ENCODE measurements at regions of chr2 and their contacts with region 1.

Region 1: DNA sequence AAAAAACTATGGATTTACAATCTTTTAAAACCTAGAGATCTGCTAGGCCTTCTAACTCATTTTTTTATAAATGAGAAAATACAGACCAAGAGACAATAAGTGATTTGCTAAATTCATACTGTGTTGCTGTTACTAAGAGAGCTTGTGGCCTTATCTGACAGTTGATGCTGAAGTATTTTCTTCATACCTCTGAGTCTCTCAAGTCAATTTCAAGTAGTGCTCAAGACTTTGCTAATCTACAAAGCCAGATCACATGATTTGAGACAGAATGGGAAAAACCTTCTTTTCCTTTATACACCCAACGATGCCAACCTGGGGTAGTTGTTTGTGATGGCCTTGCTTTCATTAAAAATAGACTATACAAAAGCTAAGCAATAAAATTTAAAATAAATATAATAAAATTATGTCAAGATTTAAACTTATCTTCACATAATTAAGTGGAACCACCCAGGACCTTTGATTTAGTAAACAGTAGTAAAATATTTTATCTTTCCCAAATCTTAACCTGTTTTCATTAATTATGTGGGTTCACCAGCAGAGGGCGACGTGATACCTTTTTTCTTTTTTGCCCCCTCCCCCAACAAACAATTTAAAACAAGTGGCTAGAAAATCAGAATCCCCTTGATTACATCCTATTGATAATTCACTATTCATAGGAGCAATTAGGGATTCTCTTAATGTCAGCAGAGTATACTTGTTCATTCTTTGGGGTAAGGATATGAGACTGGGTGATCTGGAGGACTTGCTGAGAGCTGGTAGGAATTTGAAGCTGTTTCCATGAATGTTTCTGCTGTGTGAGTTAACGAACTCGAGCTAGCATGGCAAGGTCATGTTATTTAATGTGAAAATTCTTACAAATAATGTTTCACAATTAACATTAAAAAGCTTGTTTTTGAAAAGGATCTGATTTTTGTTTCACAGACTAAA is 49.6 kb upstream of the SLC5A7 start:
- DNase-seq: peak; percentile 42
- H3K4me3 Mint-ChIP-seq: no peak overlapping the region
- H3K27ac Mint-ChIP-seq: no peak overlapping the region
- H3K4me1 Mint-ChIP-seq: no peaks in the 10 kb centered on the region
- H3K27me3 Mint-ChIP-seq: peaks cover 23% of the 10 kb centered on the region
- CTCF ChIP-seq: peak; percentile 59

Region 2: DNA sequence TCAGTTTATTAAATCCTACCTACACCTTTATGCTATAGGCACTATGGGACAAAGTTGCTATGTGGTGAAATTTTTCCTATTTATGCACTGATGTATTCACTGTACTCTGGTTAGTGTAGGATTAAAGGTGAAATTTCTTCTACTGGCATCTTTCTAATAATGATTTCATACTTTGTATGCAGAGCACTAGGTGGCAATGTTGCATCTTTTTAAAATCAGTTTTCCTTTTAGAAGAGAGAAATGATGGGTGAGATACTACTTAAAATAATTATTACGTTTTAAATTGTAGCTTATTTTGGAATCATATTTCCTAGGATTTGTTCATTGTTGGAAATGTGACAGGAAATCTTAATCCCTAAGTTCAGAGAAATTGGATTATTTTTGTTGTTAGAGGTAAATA is 1298.7 kb before region 1 on chr2:
- CTCF ChIA-PET with region 1: no interaction called
- intact Hi-C with region 1: loop called (anchors 1 kb)
- DNase-seq: no peak
- H3K4me3 Mint-ChIP-seq: no peak overlapping the region
- H3K27ac Mint-ChIP-seq: no peak overlapping the region
- H3K4me1 Mint-ChIP-seq: no peaks in the 10 kb centered on the region
- H3K27me3 Mint-ChIP-seq: peaks cover 11% of the 10 kb centered on the region
- CTCF ChIP-seq: peak; percentile 13

Region 3: DNA sequence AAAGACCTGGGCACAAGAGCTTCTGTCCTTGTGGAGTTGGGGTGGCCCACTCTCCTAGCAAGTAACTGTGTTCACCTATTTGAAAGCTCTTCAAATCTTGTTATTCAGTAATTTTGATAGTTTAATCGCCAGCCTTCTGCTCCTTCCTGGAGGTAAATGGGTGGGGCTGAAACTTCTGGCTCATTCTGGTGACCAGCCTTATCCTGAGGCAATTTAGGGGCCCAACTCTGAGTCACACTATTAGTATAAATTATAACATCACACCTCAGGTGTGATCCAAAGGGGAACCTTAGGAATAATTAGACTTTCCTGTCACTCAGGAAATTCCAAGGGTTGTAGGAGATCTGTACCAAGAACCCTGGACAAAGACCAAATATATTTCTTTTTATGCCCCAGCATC is 365.8 kb before region 1 on chr2:
- CTCF ChIA-PET with region 1: no interaction called
- intact Hi-C with region 1: loop called (anchors 10 kb)
- DNase-seq: no peak
- H3K4me3 Mint-ChIP-seq: no peak overlapping the region
- H3K27ac Mint-ChIP-seq: no peak overlapping the region
- H3K4me1 Mint-ChIP-seq: no peaks in the 10 kb centered on the region
- H3K27me3 Mint-ChIP-seq: no peaks in the 10 kb centered on the region
- CTCF ChIP-seq: no peak

Region 4: GRCh38 chr2:108034849-108035248 is 98.2 kb after region 1 on chr2:
- CTCF ChIA-PET with region 1: no interaction called
- intact Hi-C with region 1: loop called (anchors 1 kb)
- DNase-seq: no peak
- H3K4me3 Mint-ChIP-seq: no peak overlapping the region
- H3K27ac Mint-ChIP-seq: no peak overlapping the region
- H3K4me1 Mint-ChIP-seq: no peaks in the 10 kb centered on the region
- H3K27me3 Mint-ChIP-seq: no peaks in the 10 kb centered on the region
- CTCF ChIP-seq: no peak

Region 5: DNA sequence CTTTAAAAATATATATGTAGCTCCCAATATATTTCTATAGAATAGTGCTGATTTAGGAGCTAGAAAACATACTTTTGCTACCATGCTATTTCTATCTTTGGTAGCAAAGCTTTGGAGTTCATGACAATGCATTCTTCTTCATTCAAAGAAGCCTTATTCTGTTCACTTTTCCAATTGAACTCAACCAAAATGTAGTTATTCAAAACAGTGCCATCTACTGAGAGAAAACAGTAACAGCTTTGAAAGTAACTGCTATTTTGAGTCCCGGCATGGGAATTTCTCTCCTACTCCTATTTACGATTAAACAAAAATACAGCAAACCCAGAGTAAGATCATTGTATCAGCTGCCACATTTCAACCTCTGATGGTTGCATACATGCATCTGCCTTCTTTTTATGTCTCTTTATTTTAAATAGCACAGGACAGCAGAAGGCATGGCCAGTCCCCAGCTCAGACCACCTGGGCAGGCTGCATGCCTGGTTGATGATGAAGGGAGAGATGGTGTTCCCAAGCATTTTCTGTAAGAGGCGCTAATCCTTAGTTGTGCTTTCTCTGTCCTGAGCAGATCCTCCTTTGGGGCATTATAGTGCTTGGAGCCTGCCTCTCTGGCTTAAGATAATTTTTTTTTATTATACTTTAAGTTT is 233.4 kb after region 1 on chr2:
- CTCF ChIA-PET with region 1: interaction called, 5 read pairs
- intact Hi-C with region 1: loop called (anchors 1 kb)
- DNase-seq: no peak
- H3K4me3 Mint-ChIP-seq: no peak overlapping the region
- H3K27ac Mint-ChIP-seq: no peak overlapping the region
- H3K4me1 Mint-ChIP-seq: no peaks in the 10 kb centered on the region
- H3K27me3 Mint-ChIP-seq: peaks cover 40% of the 10 kb centered on the region
- CTCF ChIP-seq: peak; percentile 37

Region 6: GRCh38 chr2:108184419-108184818 is 247.7 kb after region 1 on chr2:
- CTCF ChIA-PET with region 1: interaction called, 10 read pairs
- intact Hi-C with region 1: loop called (anchors 1 kb)
- DNase-seq: peak; percentile 28
- H3K4me3 Mint-ChIP-seq: no peak overlapping the region
- H3K27ac Mint-ChIP-seq: no peak overlapping the region
- H3K4me1 Mint-ChIP-seq: peaks cover 15% of the 10 kb centered on the region
- H3K27me3 Mint-ChIP-seq: no peaks in the 10 kb centered on the region
- CTCF ChIP-seq: no peak

Region 7: GRCh38 chr2:109318150-109318948 is 1381.7 kb after region 1 on chr2:
- CTCF ChIA-PET with region 1: no interaction called
- intact Hi-C with region 1: no loop called
- DNase-seq: no peak
- H3K4me3 Mint-ChIP-seq: no peak overlapping the region
- H3K27ac Mint-ChIP-seq: no peak overlapping the region
- H3K4me1 Mint-ChIP-seq: no peaks in the 10 kb centered on the region
- H3K27me3 Mint-ChIP-seq: peaks cover 100% of the 10 kb centered on the region
- CTCF ChIP-seq: no peak